GM18951 (cell line): ENCODE measurements at regions of chr6 and their contacts with region 1.

Region 1: DNA sequence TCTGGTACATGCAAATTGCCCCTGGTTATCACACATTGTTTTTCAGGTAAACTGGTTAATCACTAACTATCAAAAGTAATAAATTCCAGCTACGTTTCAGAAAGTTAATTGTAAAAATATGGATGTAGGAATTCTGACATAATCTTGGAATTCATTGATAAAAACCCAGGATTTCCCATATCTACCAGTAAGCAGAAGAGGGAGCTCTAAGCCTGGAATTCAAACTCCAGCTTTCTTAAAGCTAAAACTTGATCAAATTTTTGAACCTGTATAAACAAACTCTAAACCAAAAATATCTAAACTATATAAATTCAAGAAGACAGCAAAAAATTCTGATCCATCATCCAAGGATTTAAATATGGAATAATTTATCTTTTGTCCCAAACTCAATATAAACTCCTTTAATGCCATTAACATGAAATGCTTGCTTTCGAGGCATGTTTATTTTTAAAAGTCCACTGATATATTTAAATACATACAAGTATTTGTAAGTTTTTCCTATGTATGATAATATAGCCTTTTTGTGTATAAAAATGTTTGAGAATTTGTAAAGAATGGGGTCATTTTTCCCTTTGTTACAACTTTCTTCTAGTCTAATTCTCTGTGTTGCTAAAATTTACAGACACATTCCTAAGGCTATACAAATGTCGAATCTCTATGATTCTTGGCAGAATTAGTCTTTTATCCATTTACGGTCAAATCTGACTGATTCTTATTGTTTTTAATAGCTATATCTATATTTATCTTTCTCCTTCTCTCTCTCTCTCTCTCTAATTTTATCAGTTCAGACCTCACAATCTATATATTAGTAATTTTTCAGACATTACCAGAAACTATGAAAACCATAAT is 91.4 kb upstream of the RNF217 start:
- POLR2A ChIP-seq: no peak

Region 2: DNA sequence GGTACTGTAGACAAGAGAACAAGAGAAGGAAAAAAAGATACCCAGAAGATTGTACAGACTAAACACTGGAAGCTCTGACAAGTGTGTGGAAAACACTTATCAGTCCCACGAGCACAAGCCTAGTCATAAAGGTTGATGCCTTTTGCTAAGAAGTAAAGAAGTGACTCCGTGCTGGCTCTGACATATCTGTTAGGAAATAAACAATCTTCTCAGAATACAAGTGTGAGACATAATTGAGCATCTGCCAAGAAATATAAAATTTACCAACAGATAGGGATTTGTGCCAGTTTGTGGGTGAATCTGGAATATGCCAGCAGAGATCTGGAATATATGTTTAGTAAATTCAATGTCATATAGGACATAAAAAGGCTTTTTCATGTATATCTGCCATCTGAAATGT is 167.3 kb before region 1 on chr6:
- in situ Hi-C with region 1: no loop called
- POLR2A ChIP-seq: no peak

Region 3: DNA sequence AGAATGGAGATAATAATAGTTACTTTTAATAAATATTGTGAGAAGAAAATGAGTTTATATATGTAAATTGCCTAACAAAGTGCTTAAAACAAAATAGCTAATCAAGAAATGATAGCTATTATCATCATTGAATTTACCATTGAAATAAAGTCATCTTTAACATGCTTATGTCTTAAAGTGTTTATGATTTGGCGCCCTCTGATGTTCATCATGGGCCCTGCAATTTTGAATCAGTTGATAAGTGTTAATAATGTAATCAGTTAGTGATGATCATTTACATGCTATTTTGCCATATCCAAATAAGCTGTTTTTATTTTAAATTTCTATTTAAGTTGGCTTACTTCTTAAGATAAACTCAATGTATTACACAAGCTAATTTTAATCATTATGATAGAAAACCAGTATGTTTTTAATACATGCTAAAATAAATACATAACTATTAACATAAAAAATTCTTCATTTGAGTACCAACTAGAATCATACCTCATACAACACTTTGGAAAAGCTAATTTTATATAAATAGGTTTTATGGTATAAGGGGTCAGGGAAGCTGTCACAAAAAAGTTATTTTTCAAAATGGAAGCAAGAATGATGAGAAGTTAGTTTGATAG is 243.5 kb after region 1 on chr6:
- in situ Hi-C with region 1: loop called (anchors 10 kb)
- POLR2A ChIP-seq: no peak